ENCODE measurements at regions of chr9 and their contacts with region 1.

Region 1: GRCh38 chr9:127214421-127215267 is 49.9 kb upstream of the GARNL3 start:
- DNase-seq: peak; percentile 82
- H3K4me3 ChIP-seq: no peak overlapping the region; a peak in 1 of 4 replicates
- H3K27ac ChIP-seq: no peak overlapping the region
- H3K4me1 ChIP-seq: peaks cover 0 to 5% of the 10 kb centered on the region in 2 experiments; a peak in 1 of 4 replicates
- H3K27me3 ChIP-seq: no peaks in the 10 kb centered on the region
- CTCF ChIP-seq: peak; percentile 85
- EP300 ChIP-seq: no peak
- RAD21 ChIP-seq: peak; percentile 83

Region 2: GRCh38 chr9:127166651-127167524 is 47.8 kb before region 1 on chr9:
- CTCF ChIA-PET with region 1: no interaction called
- POLR2A ChIA-PET with region 1: no interaction called
- DNase-seq: no peak
- H3K4me3 ChIP-seq: no peak overlapping the region
- H3K27ac ChIP-seq: no peak overlapping the region
- H3K4me1 ChIP-seq: peaks cover 20 to 31% of the 10 kb centered on the region in 2 experiments; a peak in 3 of 4 replicates
- H3K27me3 ChIP-seq: no peaks in the 10 kb centered on the region
- CTCF ChIP-seq: no peak
- EP300 ChIP-seq: no peak
- RAD21 ChIP-seq: no peak

Region 3: GRCh38 chr9:127187231-127187956 is 27.2 kb before region 1 on chr9:
- CTCF ChIA-PET with region 1: no interaction called
- POLR2A ChIA-PET with region 1: no interaction called
- DNase-seq: no peak
- H3K4me3 ChIP-seq: no peak overlapping the region
- H3K27ac ChIP-seq: peak overlapping the region; percentile 56 to 85; a peak in 2 of 4 replicates
- H3K4me1 ChIP-seq: peaks cover 21 to 22% of the 10 kb centered on the region in 2 experiments; a peak in 3 of 4 replicates
- H3K27me3 ChIP-seq: no peaks in the 10 kb centered on the region
- CTCF ChIP-seq: no peak
- EP300 ChIP-seq: no peak; a peak in 1 of 4 replicates
- RAD21 ChIP-seq: no peak

Region 4: DNA sequence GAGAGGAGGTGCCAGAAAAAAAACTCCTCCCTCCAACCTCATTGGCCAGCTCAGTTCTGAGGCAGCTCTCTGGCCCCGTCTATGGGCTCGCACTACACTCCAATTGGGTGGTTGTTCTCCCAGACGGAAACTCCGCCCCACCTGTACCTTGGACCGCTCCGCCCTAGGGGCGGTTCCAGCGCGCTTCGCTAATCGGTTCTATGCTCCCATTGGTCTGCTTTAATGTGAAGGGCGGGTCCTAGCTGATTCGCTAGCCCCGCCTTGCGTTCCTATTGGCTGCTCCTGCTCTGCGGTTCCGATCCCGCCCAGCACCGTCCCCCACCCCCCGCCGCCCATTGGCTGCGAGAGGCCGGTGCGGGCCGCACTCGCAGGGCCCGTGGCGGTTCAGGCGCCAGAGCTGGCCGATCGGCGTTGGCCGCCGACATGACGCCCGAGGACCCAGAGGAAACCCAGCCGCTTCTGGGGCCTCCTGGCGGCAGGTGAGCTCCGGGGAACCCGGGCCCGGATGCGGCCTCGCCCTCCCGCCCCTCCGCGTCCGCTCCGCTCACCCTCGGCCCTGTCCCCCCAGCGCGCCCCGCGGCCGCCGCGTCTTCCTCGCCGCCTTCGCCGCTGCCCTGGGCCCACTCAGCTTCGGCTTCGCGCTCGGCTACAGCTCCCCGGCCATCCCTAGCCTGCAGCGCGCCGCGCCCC is 182.3 kb after region 1 on chr9 and contains the start of gene SLC2A8:
- CTCF ChIA-PET with region 1: interaction called, 17 read pairs
- POLR2A ChIA-PET with region 1: no interaction called
- DNase-seq: peak; percentile 96
- H3K4me3 ChIP-seq: peak within 1 kb of the TSS; percentile 80 to 81
- H3K27ac ChIP-seq: peak within 1 kb of the TSS; percentile 57 to 67
- H3K4me1 ChIP-seq: peaks cover 7 to 18% of the 10 kb centered on the region in 2 experiments; a peak in 1 of 4 replicates
- H3K27me3 ChIP-seq: no peaks in the 10 kb centered on the region
- CTCF ChIP-seq: peak; percentile 30
- EP300 ChIP-seq: no peak
- RAD21 ChIP-seq: no peak
- polyA plus RNA-seq, gene SLC2A8: 15.1 and 18.7 TPM in 2 replicates